MCF 10A (cell line): ENCODE measurements at regions of chr20 and their contacts with region 1.

Region 1: DNA sequence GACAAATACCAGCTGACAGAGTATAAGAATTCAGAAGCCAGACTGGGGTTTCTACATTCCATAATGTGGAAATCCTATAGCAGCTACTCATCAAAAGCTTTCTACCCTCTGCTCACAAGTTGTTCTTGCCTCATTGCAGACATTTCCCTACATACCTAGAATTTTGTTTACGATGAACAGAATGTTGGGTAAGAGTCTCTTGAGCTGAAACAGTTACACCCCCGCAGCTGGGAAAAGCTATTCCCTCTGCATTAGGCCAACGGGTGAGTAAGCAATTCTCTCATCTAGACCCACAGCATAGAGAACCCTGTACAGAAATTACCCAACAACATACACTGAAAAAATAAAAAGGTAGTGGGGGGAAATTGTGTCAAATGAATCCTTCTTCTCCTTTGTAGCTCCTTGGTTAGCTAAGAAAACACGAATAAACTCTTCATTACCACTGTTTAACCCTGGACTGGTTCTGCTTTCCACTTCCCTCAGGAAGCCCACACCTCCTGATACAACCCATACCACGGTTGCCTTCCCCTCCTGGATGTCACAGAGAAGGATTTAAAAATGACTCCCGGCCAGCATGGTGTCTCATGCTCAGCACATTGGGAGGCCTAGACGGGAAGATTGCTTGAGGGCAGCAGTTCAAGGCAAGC is 215.0 kb upstream of the SHLD1 start:
- DNase-seq: peak; percentile 96
- H3K4me3 Mint-ChIP-seq: no peak overlapping the region
- H3K27ac Mint-ChIP-seq: peak overlapping the region; percentile 94
- H3K4me1 Mint-ChIP-seq: peaks cover 36% of the 10 kb centered on the region
- H3K27me3 Mint-ChIP-seq: no peaks in the 10 kb centered on the region
- CTCF ChIP-seq: no peak

Region 2: DNA sequence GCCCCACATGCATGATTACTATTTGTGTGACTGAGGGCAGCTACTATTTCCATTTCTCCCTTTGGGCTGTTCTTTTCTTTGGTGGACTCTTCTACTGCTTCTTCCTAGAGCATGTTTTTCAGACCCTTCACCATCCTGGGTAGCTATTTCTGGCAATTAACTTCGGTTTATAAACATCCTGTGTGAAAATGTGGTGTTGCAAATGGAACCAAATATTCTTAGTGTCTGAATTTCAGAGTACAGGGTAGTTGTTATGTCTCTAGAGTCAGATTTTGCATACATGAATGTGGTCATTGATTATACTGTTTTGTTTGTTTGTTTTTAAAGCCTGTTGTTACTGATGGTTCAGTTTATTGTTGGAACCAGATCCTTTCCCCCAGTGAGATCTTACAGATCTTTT is 268.2 kb before region 1 on chr20:
- CTCF ChIA-PET with region 1: no interaction called
- POLR2A ChIA-PET with region 1: no interaction called
- intact Hi-C with region 1: no loop called
- DNase-seq: no peak
- H3K4me3 Mint-ChIP-seq: no peak overlapping the region
- H3K27ac Mint-ChIP-seq: no peak overlapping the region
- H3K4me1 Mint-ChIP-seq: no peaks in the 10 kb centered on the region
- H3K27me3 Mint-ChIP-seq: peaks cover 68% of the 10 kb centered on the region
- CTCF ChIP-seq: no peak

Region 3: DNA sequence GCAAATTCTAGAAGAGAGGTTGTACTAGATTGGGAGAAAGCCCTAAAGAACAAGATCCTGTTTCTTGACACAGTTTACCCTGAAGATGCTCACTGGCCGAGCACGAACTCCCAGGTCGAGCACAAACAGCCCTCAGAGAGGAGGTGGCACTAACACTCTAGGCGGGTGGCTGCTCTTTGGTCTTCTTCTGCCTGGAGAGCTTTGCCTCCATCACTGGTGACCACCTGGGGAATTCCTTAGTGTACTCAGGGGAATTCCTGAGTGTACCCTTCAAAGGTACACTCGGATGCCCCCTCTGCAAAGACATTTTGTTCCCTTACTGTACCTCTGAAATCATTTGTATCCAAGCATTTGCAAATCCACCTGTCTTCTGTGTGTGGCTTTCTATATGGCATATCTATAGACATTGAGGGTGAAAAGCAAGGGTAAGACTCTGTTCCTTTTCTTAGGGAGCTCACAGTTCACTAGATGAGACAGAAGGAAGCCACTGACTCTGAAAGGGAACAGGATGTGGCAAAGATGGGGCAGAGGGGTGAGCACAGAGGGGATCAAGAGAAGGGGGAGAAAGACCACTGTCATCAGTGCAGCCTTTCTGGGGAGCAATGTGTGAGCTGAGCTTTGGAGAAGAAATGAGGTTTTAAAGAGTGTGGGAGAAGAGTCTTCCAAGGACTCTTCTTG is 48.7 kb before region 1 on chr20:
- CTCF ChIA-PET with region 1: no interaction called
- POLR2A ChIA-PET with region 1: no interaction called
- intact Hi-C with region 1: no loop called
- DNase-seq: no peak
- H3K4me3 Mint-ChIP-seq: no peak overlapping the region
- H3K27ac Mint-ChIP-seq: no peak overlapping the region
- H3K4me1 Mint-ChIP-seq: peaks cover 7% of the 10 kb centered on the region
- H3K27me3 Mint-ChIP-seq: peaks cover 61% of the 10 kb centered on the region
- CTCF ChIP-seq: no peak

Region 4: DNA sequence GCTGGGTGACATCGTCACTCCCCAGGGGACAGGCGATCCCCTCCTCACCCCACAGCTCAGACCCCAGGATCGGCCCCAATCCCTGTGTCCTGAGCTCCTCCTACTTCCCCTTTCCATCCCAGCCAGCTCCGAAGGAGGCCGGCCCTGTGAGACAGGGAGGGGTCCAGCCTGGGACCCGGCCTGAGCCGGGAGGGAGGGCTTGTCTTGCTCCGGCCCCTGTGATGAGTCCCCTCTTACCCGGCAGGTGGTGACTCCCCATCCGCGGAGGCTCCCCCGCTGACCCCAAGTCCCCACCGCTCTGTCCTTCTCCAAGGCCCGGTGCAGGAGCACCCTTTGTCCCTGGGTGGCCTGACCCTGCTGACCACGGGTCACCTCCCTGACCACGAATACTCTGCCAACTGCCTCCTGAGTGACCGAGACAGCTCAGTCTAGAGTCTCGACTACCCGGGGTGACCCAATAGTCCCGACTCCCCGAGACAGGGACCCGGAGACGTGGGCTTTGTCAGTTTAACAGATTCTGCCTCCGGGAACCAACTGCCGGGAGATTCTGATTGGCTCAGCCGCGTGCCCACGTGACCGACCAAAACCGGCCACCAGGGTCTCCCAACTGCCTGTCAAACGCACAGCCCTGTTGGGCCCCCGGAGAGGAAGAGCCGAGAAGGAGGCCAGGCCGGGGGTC is 31.0 kb before region 1 on chr20:
- CTCF ChIA-PET with region 1: no interaction called
- POLR2A ChIA-PET with region 1: no interaction called
- intact Hi-C with region 1: no loop called
- DNase-seq: no peak
- H3K4me3 Mint-ChIP-seq: no peak overlapping the region
- H3K27ac Mint-ChIP-seq: no peak overlapping the region
- H3K4me1 Mint-ChIP-seq: no peaks in the 10 kb centered on the region
- H3K27me3 Mint-ChIP-seq: no peaks in the 10 kb centered on the region
- CTCF ChIP-seq: no peak

Region 5: GRCh38 chr20:5557123-5557522 is 21.9 kb after region 1 on chr20:
- CTCF ChIA-PET with region 1: interaction called, 28 read pairs
- POLR2A ChIA-PET with region 1: interaction called, 13 read pairs
- intact Hi-C with region 1: no loop called
- DNase-seq: peak; percentile 56
- H3K4me3 Mint-ChIP-seq: no peak overlapping the region
- H3K27ac Mint-ChIP-seq: no peak overlapping the region
- H3K4me1 Mint-ChIP-seq: peaks cover 4% of the 10 kb centered on the region
- H3K27me3 Mint-ChIP-seq: no peaks in the 10 kb centered on the region
- CTCF ChIP-seq: peak; percentile 60

Region 6: DNA sequence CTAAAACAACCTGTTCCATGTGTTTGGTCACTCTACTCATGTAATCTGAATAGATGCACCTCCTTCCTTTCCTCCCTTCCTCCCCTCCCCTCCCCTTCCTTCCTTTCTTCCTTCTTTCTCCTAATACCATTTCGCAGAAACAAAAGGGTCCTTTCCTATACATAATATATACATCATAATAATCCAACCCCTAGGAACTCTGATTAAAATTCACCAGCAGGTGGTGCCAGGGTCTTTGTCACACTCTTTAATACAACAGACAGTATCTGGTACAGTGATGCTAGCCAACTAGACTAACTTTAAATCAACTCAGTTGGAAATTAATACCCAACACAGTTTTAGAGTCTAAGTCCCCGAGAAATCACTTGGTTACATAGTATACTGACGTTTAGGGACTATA is 33.8 kb after region 1 on chr20:
- CTCF ChIA-PET with region 1: interaction called, 27 read pairs
- POLR2A ChIA-PET with region 1: interaction called, 6 read pairs
- intact Hi-C with region 1: no loop called
- DNase-seq: peak; percentile 67
- H3K4me3 Mint-ChIP-seq: no peak overlapping the region
- H3K27ac Mint-ChIP-seq: no peak overlapping the region
- H3K4me1 Mint-ChIP-seq: peaks cover 6% of the 10 kb centered on the region
- H3K27me3 Mint-ChIP-seq: no peaks in the 10 kb centered on the region
- CTCF ChIP-seq: peak; percentile 57

Region 7: GRCh38 chr20:5933802-5934436 is 398.7 kb after region 1 on chr20:
- CTCF ChIA-PET with region 1: interaction called, 41 read pairs
- POLR2A ChIA-PET with region 1: interaction called, 3 read pairs
- intact Hi-C with region 1: no loop called
- DNase-seq: peak; percentile 56
- H3K4me3 Mint-ChIP-seq: no peak overlapping the region
- H3K27ac Mint-ChIP-seq: no peak overlapping the region
- H3K4me1 Mint-ChIP-seq: peaks cover 5% of the 10 kb centered on the region
- H3K27me3 Mint-ChIP-seq: no peaks in the 10 kb centered on the region
- CTCF ChIP-seq: peak; percentile 42

Region 8: DNA sequence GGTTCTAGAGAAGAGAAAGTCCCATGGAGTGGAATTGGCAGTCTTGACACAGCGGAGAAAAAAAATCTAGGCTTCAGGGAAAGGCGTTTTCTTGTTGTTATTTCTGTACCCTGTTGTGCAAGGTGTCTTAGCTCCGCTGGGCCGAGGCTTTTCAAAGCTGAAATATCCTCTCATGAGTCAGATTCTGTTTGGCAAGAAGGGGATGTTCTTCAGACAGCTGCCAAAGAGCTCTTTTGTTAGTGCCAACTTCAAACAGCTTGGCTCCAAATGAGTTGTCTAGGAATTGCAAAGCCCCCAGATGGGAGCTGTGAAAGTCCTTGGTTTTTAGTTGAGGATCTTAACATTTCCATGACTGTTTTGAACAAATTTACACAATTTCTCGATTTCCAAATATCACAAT is 473.0 kb after region 1 on chr20:
- CTCF ChIA-PET with region 1: interaction called, 13 read pairs
- POLR2A ChIA-PET with region 1: interaction called, 21 read pairs
- intact Hi-C with region 1: no loop called
- DNase-seq: peak; percentile 99
- H3K4me3 Mint-ChIP-seq: peak overlapping the region; percentile 76
- H3K27ac Mint-ChIP-seq: peak overlapping the region; percentile 83
- H3K4me1 Mint-ChIP-seq: peaks cover 21% of the 10 kb centered on the region
- H3K27me3 Mint-ChIP-seq: no peaks in the 10 kb centered on the region
- CTCF ChIP-seq: no peak